ENCODE measurements at regions of chr9 and their contacts with region 1.

Region 1: DNA sequence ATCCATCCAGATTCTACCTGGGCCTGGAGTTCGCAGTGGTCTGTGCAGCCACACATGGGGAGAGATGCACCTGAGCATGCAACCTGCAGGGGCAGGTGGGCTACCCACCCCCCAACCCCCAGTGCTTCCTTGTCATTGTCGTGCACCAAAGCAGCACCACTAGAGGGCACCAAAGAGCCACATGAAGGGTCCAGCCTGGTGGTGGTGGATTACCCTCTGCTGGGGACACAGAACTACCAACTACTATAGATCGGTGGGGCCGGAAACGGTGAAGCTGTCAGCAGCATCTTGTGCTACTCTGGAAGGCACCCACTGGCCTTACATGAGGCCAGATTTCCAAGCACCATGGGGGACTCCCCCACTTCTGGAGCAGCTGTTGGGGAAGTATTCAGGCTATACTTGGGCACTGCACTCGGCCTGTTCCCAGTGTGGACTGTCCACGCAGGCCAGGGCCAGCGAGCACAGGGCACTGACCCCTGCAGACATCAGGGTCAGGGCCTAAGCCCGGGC is 60.2 kb upstream of the TBC1D2 start:
- DNase-seq: peak; percentile 64
- H3K4me3 ChIP-seq: no peak overlapping the region
- H3K27ac ChIP-seq: no peak overlapping the region
- H3K4me1 ChIP-seq: no peaks in the 10 kb centered on the region
- H3K27me3 ChIP-seq: peaks cover 8% of the 10 kb centered on the region
- CTCF ChIP-seq: peak; percentile 90

Region 2: DNA sequence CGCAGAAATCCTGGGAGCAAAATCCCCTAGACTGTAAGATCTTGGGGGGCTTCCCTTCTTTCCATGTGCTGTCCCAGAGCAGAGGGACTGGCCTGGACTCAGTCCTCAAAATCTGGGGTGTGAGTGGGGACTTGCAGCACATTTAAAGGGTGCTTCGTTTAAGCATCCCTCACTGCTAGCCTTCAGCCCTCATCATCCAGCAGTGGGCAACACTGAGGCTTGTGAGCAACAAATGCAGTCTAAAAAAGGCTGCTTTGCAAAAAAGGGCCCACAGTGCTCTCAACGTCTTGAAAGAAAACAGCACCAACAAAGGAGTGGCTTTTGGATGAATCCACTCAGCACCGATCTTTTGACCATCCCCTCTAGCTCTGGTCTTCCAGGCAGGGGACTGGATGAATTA is 68.2 kb after region 1 on chr9:
- intact Hi-C with region 1: no loop called
- DNase-seq: no peak
- H3K4me3 ChIP-seq: no peak overlapping the region
- H3K27ac ChIP-seq: no peak overlapping the region
- H3K4me1 ChIP-seq: peaks cover 4% of the 10 kb centered on the region
- H3K27me3 ChIP-seq: no peaks in the 10 kb centered on the region
- CTCF ChIP-seq: no peak

Region 3: GRCh38 chr9:98607787-98608186 is 292.2 kb after region 1 on chr9:
- intact Hi-C with region 1: no loop called
- DNase-seq: no peak
- H3K4me3 ChIP-seq: no peak overlapping the region
- H3K27ac ChIP-seq: peak overlapping the region; percentile 37
- H3K4me1 ChIP-seq: peaks cover 11% of the 10 kb centered on the region
- H3K27me3 ChIP-seq: peaks cover 10% of the 10 kb centered on the region
- CTCF ChIP-seq: no peak

Region 4: GRCh38 chr9:98775831-98776441 is 460.3 kb after region 1 on chr9:
- intact Hi-C with region 1: loop called (anchors 10 kb)
- DNase-seq: no peak
- H3K4me3 ChIP-seq: no peak overlapping the region
- H3K27ac ChIP-seq: no peak overlapping the region
- H3K4me1 ChIP-seq: no peaks in the 10 kb centered on the region
- H3K27me3 ChIP-seq: no peaks in the 10 kb centered on the region
- CTCF ChIP-seq: peak; percentile 76